Naive thymus-derived CD4-positive, alpha-beta T cell (primary cell): ENCODE measurements at regions of chr17 and their contacts with region 1.

Region 1: GRCh38 chr17:14094676-14095601 is 25.6 kb downstream of the COX10 start:
- DNase-seq: no peak
- ATAC-seq: no peak
- H3K4me3 ChIP-seq: no peak overlapping the region
- H3K4me3 Mint-ChIP-seq: no peak overlapping the region
- H3K27ac ChIP-seq: no peak overlapping the region
- H3K27ac Mint-ChIP-seq: peak overlapping the region in 1 of 9 donors; percentile 36
- H3K4me1 ChIP-seq: no peaks in the 10 kb centered on the region
- H3K4me1 Mint-ChIP-seq: peaks cover 7 to 68% (median 57%) of the 10 kb centered on the region in 7 donors
- H3K27me3 ChIP-seq: no peaks in the 10 kb centered on the region
- H3K27me3 Mint-ChIP-seq: no peaks in the 10 kb centered on the region

Region 2: DNA sequence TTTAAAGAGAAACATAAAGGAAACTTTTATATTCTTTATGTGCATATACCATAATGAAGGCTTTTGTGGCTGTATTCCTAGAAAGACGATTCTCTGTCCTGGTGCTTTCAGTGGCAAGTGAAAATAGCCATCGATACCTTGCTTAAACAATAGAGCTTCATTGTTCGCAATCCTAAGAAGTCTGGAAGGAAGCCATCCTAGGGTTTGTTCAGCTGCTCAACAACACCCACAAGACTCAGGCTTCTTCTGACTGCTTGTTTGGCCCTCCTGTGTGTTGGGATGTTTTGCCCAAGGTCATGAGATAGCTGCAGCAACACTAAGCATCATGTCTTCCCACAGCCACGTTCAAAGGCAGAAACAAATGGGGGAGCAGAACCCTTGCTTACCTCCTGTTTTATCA is 61.8 kb before region 1 on chr17:
- CTCF ChIA-PET with region 1: no interaction called
- POLR2A ChIA-PET with region 1: no interaction called
- intact Hi-C with region 1: no loop called
- DNase-seq: no peak
- ATAC-seq: no peak
- H3K4me3 ChIP-seq: no peak overlapping the region
- H3K4me3 Mint-ChIP-seq: no peak overlapping the region
- H3K27ac ChIP-seq: no peak overlapping the region
- H3K27ac Mint-ChIP-seq: peak overlapping the region in 1 of 9 donors; percentile 19
- H3K4me1 ChIP-seq: no peaks in the 10 kb centered on the region
- H3K4me1 Mint-ChIP-seq: peaks cover 7 to 30% (median 16%) of the 10 kb centered on the region in 7 donors
- H3K27me3 ChIP-seq: no peaks in the 10 kb centered on the region
- H3K27me3 Mint-ChIP-seq: no peaks in the 10 kb centered on the region

Region 3: GRCh38 chr17:14113137-14113536 is 18.2 kb after region 1 on chr17:
- CTCF ChIA-PET with region 1: no interaction called
- POLR2A ChIA-PET with region 1: no interaction called
- intact Hi-C with region 1: loop called in 1 of 2 experiments (anchors 2 kb)
- DNase-seq: no peak
- ATAC-seq: no peak
- H3K4me3 ChIP-seq: no peak overlapping the region
- H3K4me3 Mint-ChIP-seq: no peak overlapping the region
- H3K27ac ChIP-seq: no peak overlapping the region
- H3K27ac Mint-ChIP-seq: peak overlapping the region in 5 of 9 donors; percentile 39 to 60 (median 58)
- H3K4me1 ChIP-seq: no peaks in the 10 kb centered on the region
- H3K4me1 Mint-ChIP-seq: peaks cover 27 to 72% (median 62%) of the 10 kb centered on the region in 7 donors
- H3K27me3 ChIP-seq: no peaks in the 10 kb centered on the region
- H3K27me3 Mint-ChIP-seq: no peaks in the 10 kb centered on the region